A673 (cell line): ENCODE measurements at regions of chr1 and their contacts with region 1.

Region 1: GRCh38 chr1:185646202-185646683 is 87.9 kb upstream of the HMCN1 start:
- DNase-seq: peak; percentile 100
- H3K4me3 ChIP-seq: peak overlapping the region; percentile 30
- H3K27ac ChIP-seq: peak overlapping the region; percentile 88
- H3K4me1 ChIP-seq: peaks cover 43% of the 10 kb centered on the region
- H3K27me3 ChIP-seq: no peaks in the 10 kb centered on the region
- CTCF ChIP-seq: no peak

Region 2: DNA sequence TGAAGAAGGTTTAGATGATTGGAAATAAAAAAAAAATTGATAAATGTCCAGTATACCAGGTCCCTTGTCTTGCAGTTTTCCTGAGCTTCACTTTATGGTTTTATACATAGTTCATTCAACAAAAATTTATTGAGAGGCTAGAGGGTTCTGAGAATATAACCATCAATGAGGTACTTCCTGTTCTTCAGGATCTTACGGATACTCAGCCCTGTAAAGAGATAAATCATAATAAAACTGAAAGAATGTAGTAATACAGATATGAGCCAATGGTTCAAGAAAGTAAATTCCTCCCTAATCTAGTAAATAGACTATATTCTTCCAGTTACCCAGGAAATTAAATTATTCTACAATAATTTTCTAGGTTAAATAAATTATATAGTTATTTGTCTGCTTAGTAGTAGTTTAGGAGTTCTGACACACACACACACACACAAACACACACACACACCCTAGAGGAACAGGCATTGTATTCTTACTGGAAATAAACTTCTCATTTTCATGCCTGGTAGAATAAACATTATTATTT is 17.6 kb after region 1 on chr1:
- CTCF ChIA-PET with region 1: no interaction called
- POLR2A ChIA-PET with region 1: interaction called, 18 read pairs
- intact Hi-C with region 1: no loop called
- DNase-seq: peak; percentile 45
- H3K4me3 ChIP-seq: no peak overlapping the region
- H3K27ac ChIP-seq: peak overlapping the region; percentile 66
- H3K4me1 ChIP-seq: peaks cover 44% of the 10 kb centered on the region
- H3K27me3 ChIP-seq: no peaks in the 10 kb centered on the region
- CTCF ChIP-seq: no peak

Region 3: DNA sequence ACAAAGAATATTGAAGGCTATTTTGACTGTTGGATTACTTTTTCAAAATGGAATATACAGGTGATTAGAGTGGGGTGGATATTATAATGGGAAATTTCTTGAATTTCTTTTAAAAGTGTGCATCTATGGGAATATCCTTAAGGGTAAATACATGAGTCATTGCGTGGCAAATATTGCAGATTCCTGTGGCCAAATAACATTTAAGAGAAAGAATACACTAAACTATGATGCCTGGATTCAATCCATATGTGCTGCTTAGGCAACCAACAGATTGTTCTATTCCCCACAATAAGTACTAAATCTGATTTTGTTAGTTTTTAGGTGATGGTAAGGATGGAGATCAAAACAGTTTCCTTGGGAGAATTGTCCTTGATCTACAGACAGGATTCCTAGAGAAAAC is 207.5 kb after region 1 on chr1:
- CTCF ChIA-PET with region 1: no interaction called
- POLR2A ChIA-PET with region 1: no interaction called
- intact Hi-C with region 1: no loop called
- DNase-seq: no peak
- H3K4me3 ChIP-seq: no peak overlapping the region
- H3K27ac ChIP-seq: no peak overlapping the region
- H3K4me1 ChIP-seq: peaks cover 77% of the 10 kb centered on the region
- H3K27me3 ChIP-seq: no peaks in the 10 kb centered on the region
- CTCF ChIP-seq: no peak